GM23248 (cell line): ENCODE measurements at regions of chr1 and their contacts with region 1.

Region 1: GRCh38 chr1:9101510-9102146 is 27.3 kb downstream of the GPR157 start:
- DNase-seq: peak; percentile 81
- H3K4me3 ChIP-seq: no peak overlapping the region
- H3K27ac ChIP-seq: no peak overlapping the region
- H3K4me1 ChIP-seq: no peaks in the 10 kb centered on the region
- H3K27me3 ChIP-seq: no peaks in the 10 kb centered on the region

Region 2: DNA sequence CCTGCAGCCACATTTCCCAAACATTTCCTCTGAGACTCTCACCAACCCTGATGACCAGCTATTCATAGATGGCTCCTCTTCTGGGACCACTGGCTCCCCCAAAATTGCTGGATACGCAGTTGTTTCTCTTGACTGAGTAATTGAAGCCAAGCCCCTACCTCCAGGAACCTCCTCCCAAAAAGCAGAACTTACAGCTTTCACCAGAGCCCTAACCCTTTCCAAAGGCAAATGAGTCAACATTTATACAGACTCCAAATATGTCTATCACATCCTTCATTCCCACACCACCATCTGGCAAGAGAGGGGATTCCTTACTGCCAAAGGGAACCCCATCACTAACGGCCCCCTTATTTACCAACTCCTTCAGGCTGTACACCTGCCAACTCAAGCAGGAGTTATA is 176.2 kb before region 1 on chr1:
- in situ Hi-C with region 1: loop called (anchors 10 kb)
- DNase-seq: no peak
- H3K4me3 ChIP-seq: no peak overlapping the region
- H3K27ac ChIP-seq: no peak overlapping the region
- H3K4me1 ChIP-seq: no peaks in the 10 kb centered on the region
- H3K27me3 ChIP-seq: 0 out of 2 replicates have a peak, but pooled peaks cover 4% of the 10 kb centered on the region